ENCODE measurements at regions of chr10 and their contacts with region 1.

Region 1: GRCh38 chr10:1056326-1057105 is at the start of gene WDR37:
- DNase-seq: peak; percentile 94
- ATAC-seq: peak; percentile 89
- H3K4me3 Mint-ChIP-seq: peak within 1 kb of the TSS; percentile 94
- H3K27ac Mint-ChIP-seq: peak within 1 kb of the TSS; percentile 92
- H3K4me1 Mint-ChIP-seq: peaks cover 74% of the 10 kb centered on the region
- H3K27me3 Mint-ChIP-seq: no peaks in the 10 kb centered on the region
- CTCF ChIP-seq: no peak
- total RNA-seq, gene WDR37: 16.2 and 20.0 TPM in 2 replicates

Region 2: GRCh38 chr10:135601-136464 is 920.7 kb before region 1 on chr10:
- CTCF ChIA-PET with region 1: no interaction called
- POLR2A ChIA-PET with region 1: no interaction called
- intact Hi-C with region 1: loop called (anchors 5 kb)
- DNase-seq: peak; percentile 73
- ATAC-seq: peak; percentile 51
- H3K4me3 Mint-ChIP-seq: peak overlapping the region; percentile 77
- H3K27ac Mint-ChIP-seq: peak overlapping the region; percentile 60
- H3K4me1 Mint-ChIP-seq: peaks cover 28% of the 10 kb centered on the region
- H3K27me3 Mint-ChIP-seq: peaks cover 4% of the 10 kb centered on the region
- CTCF ChIP-seq: no peak

Region 3: DNA sequence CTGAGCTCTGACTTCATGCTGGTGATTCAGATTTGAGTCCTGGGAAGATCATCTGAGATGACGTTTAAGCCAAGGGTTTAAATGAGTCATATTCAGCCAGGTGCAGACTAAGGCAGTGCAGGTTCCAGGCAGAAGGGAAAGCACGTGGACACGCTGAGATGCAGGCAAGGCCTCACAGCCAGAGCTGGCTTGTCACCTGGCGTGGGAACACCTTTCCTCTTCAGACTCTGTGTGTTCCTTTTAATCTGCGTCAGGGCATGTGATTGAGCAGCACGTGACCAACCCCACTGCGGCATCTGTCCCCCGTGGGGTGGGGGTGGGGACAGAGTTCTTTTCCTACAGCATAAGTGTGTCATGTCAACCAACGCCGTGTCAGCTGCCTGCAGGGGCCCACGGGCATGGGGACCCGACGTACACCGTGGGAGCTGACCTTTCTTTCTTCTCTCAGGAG is 20.1 kb before region 1 on chr10:
- CTCF ChIA-PET with region 1: no interaction called
- POLR2A ChIA-PET with region 1: interaction called, 69 read pairs
- intact Hi-C with region 1: no loop called
- DNase-seq: peak; percentile 27
- ATAC-seq: peak; percentile 90
- H3K4me3 Mint-ChIP-seq: peak overlapping the region; percentile 20
- H3K27ac Mint-ChIP-seq: peak overlapping the region; percentile 72
- H3K4me1 Mint-ChIP-seq: peaks cover 30% of the 10 kb centered on the region
- H3K27me3 Mint-ChIP-seq: no peaks in the 10 kb centered on the region
- CTCF ChIP-seq: no peak

Region 4: GRCh38 chr10:1043532-1043995 is 13.0 kb before region 1 on chr10:
- CTCF ChIA-PET with region 1: no interaction called
- POLR2A ChIA-PET with region 1: interaction called, 69 read pairs
- intact Hi-C with region 1: loop called (anchors 1 kb)
- DNase-seq: peak; percentile 25
- ATAC-seq: peak; percentile 66
- H3K4me3 Mint-ChIP-seq: peak overlapping the region; percentile 84
- H3K27ac Mint-ChIP-seq: peak overlapping the region; percentile 97
- H3K4me1 Mint-ChIP-seq: peaks cover 48% of the 10 kb centered on the region
- H3K27me3 Mint-ChIP-seq: no peaks in the 10 kb centered on the region
- CTCF ChIP-seq: no peak